Activated naive CD8-positive, alpha-beta T cell treated with anti-CD3 and anti-CD28 coated beads, Interleukin-2, amount 10 ng/mL, durations not matched to agents 7 days and 5 days (primary cell): ENCODE measurements at regions of chr10 and their contacts with region 1.

Region 1: GRCh38 chr10:45420453-45421192 is 46.6 kb downstream of the ALOX5 start:
- DNase-seq: peak; percentile 70
- ATAC-seq: peak; percentile 32
- H3K4me3 Mint-ChIP-seq: peak overlapping the region; percentile 99
- H3K27ac Mint-ChIP-seq: peak overlapping the region; percentile 98
- H3K4me1 Mint-ChIP-seq: peaks cover 66% of the 10 kb centered on the region
- H3K27me3 Mint-ChIP-seq: no peaks in the 10 kb centered on the region

Region 2: DNA sequence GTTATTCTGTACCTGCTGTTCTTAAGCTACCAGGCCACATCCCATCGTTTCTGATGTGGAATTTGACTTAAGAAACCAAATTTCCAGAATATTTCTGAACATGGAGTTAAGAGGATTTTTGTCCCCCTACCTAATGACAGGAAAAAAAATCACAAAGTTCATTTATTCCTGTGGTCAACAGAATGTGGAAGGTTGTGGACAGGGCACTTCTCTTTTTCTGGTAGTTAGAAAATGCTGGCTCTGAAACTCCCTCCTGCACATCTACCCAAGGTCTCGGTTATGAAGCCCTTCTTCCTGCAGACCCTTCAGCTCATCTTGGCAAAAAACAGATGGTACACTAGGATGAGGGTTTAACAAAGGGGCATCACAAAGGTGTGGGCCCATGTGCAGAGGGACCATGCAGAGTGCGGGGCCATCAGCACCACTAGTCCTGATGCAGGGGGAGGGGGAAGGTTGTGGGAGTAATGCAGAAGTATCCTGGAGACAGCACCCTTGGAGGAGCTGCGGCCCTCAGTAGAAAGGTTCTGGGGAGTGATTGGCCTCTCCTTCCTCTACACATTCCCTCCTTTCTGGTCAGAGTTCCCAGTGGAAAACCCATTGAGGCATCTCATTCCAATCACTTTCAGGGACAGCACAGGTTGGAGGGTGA is 36.8 kb before region 1 on chr10:
- POLR2A ChIA-PET with region 1: no interaction called
- DNase-seq: no peak
- ATAC-seq: no peak
- H3K4me3 Mint-ChIP-seq: no peak overlapping the region
- H3K27ac Mint-ChIP-seq: no peak overlapping the region
- H3K4me1 Mint-ChIP-seq: no peaks in the 10 kb centered on the region
- H3K27me3 Mint-ChIP-seq: peaks cover 2% of the 10 kb centered on the region

Region 3: DNA sequence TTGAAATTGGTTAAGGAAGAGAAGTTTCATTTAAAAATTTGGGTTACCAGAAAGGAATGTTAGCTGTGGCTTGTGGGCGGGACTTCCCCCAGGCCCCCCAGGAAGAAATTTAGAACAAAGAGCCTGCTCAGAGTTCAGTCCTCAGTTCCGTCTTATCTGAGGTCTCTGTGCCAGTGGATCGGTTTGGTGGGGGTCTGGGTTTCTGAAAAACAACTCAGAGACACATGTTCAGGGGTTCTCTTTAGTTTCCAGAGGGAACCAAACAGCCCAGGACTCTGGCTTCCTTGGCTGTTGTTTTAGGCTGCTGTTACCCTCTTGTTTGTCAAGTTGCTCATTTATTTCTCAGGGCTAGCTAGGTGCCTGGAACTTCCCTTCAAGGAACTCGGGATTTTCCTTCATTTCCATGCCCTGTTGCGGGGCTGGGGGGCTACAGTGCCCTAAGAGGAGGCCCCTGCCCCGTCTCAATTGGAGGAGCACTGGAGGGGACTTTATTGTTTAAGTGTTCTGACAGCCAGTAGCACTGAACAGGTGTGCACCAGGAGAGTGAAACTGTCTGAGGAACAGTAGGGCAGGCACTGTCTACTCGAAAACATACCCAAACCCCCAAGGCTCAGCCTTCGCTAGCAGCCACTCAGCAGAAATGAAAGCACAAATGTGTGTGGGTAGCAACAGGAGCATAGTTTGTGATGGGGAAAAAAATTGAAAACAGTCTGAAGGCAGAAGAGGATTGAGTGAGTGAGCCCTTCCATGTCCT is 13.3 kb after region 1 on chr10:
- POLR2A ChIA-PET with region 1: interaction called, 41 read pairs
- DNase-seq: no peak
- ATAC-seq: peak; percentile 81
- H3K4me3 Mint-ChIP-seq: peak overlapping the region; percentile 78
- H3K27ac Mint-ChIP-seq: peak overlapping the region; percentile 96
- H3K4me1 Mint-ChIP-seq: peaks cover 47% of the 10 kb centered on the region
- H3K27me3 Mint-ChIP-seq: no peaks in the 10 kb centered on the region

Region 4: GRCh38 chr10:45453639-45454255 is 33.1 kb after region 1 on chr10:
- POLR2A ChIA-PET with region 1: interaction called, 46 read pairs
- DNase-seq: no peak
- ATAC-seq: no peak
- H3K4me3 Mint-ChIP-seq: no peak overlapping the region
- H3K27ac Mint-ChIP-seq: peak overlapping the region; percentile 98
- H3K4me1 Mint-ChIP-seq: peaks cover 34% of the 10 kb centered on the region
- H3K27me3 Mint-ChIP-seq: no peaks in the 10 kb centered on the region

Region 5: DNA sequence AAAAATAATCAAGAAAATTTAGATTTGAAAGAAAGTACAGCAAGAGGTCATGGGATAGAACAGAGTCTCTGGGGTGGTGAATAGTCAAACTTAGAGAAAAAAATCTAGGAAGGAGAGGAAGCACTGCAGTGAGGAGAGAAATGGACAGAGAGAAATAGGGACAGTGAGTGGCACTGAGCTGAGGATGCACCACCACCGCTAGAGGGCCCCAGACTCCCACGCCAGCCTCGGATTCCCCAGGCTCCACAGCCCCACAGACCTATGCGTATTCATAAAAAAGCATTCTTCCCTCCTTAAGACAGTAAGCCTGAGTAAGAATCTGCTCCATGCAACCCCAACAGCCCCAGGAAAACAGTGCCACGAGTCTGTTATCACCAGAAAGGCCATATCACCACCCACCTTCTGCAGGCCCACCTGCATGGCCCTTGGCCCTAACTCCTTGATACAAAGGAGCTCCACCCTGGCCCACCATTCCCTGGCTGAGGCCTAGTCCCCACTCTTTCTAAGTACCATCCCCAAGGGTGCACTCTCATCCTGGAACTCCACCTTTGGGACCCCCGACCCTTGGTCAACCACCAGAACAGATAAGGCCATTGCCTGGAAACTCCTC is 44.4 kb after region 1 on chr10:
- POLR2A ChIA-PET with region 1: interaction called, 19 read pairs
- DNase-seq: peak; percentile 83
- ATAC-seq: peak; percentile 98
- H3K4me3 Mint-ChIP-seq: peak overlapping the region; percentile 15
- H3K27ac Mint-ChIP-seq: peak overlapping the region; percentile 67
- H3K4me1 Mint-ChIP-seq: peaks cover 49% of the 10 kb centered on the region
- H3K27me3 Mint-ChIP-seq: no peaks in the 10 kb centered on the region

Region 6: DNA sequence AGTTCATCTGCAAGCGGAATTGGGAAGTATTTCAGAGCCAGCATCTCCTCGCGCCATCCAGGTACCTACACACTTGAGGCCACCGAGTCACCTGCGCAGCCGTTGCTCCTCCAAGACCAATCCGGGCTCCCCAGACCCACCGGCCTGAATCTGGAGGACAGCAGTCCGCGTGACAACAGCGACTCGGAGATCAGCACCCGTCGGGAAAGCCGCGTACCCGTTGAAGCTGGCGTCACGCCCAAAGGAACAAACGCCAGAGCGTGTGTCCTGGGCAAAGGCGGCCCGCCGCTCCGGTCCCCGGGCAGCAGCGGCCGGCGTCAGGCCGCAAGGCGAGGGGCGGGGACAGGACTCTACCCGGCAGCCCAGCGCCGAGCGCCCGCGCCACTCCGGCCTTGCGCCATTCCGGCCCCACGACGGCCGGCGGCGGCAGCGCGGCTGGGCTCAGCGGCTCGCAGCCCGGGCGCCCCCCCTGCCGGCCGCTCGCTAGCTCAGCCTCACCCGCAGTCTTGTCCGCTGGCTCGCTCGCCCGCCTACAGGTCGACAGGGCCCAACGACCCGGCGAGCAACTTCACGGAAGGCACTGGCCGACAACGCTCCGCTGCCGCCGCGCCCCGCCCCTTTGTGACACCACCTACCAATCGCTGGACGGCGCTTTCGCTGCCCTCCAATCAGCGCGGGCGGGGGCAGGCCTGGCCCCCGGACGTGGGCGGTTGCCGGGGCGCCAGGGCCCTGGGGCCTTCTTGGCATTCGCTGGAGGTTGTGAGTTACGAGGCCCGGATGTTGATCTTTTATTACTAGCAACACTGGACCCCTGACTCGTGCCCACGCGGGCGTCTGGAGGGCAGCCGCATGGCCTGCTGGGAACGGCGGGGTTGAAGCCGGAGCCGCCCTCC is 251.8 kb after region 1 on chr10 and contains the start of gene ZFAND4:
- POLR2A ChIA-PET with region 1: interaction called, 10 read pairs
- DNase-seq: peak; percentile 97
- ATAC-seq: peak; percentile 96
- H3K4me3 Mint-ChIP-seq: peak within 1 kb of the TSS; percentile 88
- H3K27ac Mint-ChIP-seq: peak within 1 kb of the TSS; percentile 86
- H3K4me1 Mint-ChIP-seq: peaks cover 28% of the 10 kb centered on the region
- H3K27me3 Mint-ChIP-seq: no peaks in the 10 kb centered on the region
- total RNA-seq, gene ZFAND4: 22.3 to 24.3 TPM